PC-3 (cell line): ENCODE measurements at regions of chr4 and their contacts with region 1.

Region 1: GRCh38 chr4:185405296-185405999 is 8.8 kb downstream of the ANKRD37 start:
- DNase-seq: no peak
- ATAC-seq: no peak
- H3K4me3 ChIP-seq: no peak overlapping the region
- H3K27ac ChIP-seq: no peak overlapping the region
- H3K4me1 ChIP-seq: no peaks in the 10 kb centered on the region
- H3K27me3 ChIP-seq: no peaks in the 10 kb centered on the region
- CTCF ChIP-seq: no peak

Region 2: GRCh38 chr4:185730387-185730786 is 324.9 kb after region 1 on chr4:
- CTCF ChIA-PET with region 1: no interaction called
- POLR2A ChIA-PET with region 1: no interaction called
- intact Hi-C with region 1: no loop called
- DNase-seq: no peak
- ATAC-seq: no peak
- H3K4me3 ChIP-seq: no peak overlapping the region
- H3K27ac ChIP-seq: no peak overlapping the region
- H3K4me1 ChIP-seq: no peaks in the 10 kb centered on the region
- H3K27me3 ChIP-seq: no peaks in the 10 kb centered on the region
- CTCF ChIP-seq: no peak

Region 3: DNA sequence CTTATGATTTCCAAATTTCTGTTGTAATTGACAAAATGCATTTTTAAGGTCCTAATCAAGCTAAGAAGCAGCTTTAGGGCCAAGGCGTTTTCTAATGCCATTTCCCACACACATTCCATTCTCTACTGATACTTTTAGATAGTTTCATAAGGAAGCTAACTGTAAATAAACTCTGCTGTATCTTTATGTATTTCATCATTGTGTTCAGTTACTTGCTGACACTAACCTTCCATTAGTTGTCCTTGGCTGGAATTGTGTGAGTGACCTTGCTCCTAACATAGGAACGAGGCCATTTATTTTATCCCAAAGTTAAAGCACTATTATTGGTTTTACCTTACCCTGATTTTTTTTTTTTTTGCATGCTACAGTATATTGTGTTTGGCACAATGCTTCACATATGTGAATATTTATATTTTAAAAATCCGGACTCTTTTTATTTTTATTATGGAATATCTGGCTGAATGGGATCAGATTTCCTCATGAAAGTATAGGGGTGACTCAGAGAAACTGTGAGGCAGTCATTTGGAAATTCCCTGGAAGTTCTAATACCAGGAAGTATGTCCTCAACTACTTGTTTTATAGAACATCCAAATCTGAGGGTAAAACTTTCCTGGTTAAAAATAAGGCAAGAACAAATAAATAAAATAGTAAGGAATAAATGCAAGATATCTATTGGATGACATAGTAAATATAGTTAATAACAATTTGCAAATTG is 469.2 kb after region 1 on chr4:
- CTCF ChIA-PET with region 1: no interaction called
- POLR2A ChIA-PET with region 1: interaction called, 15 read pairs
- intact Hi-C with region 1: no loop called
- DNase-seq: peak; percentile 40
- ATAC-seq: peak; percentile 76
- H3K4me3 ChIP-seq: no peak overlapping the region
- H3K27ac ChIP-seq: peak overlapping the region; percentile 46
- H3K4me1 ChIP-seq: peaks cover 15% of the 10 kb centered on the region
- H3K27me3 ChIP-seq: no peaks in the 10 kb centered on the region
- CTCF ChIP-seq: no peak

Region 4: DNA sequence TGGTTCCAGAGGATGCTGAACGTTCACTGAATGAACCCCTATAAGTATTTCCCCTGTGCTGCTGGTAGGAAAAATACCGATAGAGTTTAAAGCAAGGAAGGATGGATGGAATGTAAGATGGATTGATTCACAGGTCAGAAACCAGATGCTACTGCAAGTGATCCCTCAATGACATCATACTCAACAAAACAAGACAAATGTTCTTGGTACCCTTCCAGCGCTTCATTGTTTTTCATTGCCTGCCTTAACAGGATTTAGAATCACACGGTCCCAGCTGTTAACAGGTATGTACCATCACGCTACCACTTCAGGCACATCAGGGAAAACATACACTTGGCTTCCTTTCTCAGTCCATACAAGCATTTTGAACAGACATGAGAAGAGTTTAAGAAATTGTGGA is 545.4 kb after region 1 on chr4:
- CTCF ChIA-PET with region 1: no interaction called
- POLR2A ChIA-PET with region 1: no interaction called
- intact Hi-C with region 1: no loop called
- DNase-seq: no peak
- ATAC-seq: no peak
- H3K4me3 ChIP-seq: no peak overlapping the region
- H3K27ac ChIP-seq: no peak overlapping the region
- H3K4me1 ChIP-seq: no peaks in the 10 kb centered on the region
- H3K27me3 ChIP-seq: no peaks in the 10 kb centered on the region
- CTCF ChIP-seq: no peak